Lower leg skin (tissue), 4 donors: ENCODE measurements at regions of chr10 and their contacts with region 1.

Region 1: GRCh38 chr10:33330543-33331378 is 3.7 kb downstream of the NRP1 start:
- DNase-seq: peak; percentile 85 to 97
- H3K4me3 ChIP-seq: no peak overlapping the region
- CTCF ChIP-seq: peak in 1 of 3 donors; percentile 68
- POLR2A ChIP-seq: no peak

Region 2: DNA sequence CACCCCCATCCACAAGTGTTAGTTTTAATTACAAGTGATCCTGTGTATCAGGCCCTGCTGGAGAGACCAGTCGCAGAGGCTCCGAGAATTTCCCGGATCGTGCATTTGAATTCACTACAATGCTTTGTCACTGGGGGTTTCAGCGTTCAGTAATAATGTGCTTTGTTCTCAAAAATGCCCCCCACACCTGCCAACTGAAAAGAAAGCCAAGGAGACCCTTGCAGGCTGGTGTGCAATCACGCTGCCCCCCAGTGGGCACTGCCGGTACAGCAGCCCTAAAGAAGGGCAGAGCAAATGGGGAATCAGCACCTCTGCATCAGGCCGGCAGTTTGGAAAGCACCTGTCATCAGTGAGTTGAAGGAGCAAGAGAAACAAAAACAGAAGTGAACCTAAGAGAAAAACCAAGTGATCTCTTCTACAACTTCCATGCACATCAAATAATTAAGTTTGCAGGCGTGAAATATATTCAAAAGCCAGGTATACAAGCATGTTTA is 1306.7 kb after region 1 on chr10:
- intact Hi-C with region 1: loop called (anchors 10 kb)
- DNase-seq: peak; percentile 31 to 92
- H3K4me3 ChIP-seq: no peak overlapping the region
- CTCF ChIP-seq: peak in 1 of 3 donors; percentile 73
- POLR2A ChIP-seq: no peak